Activated CD4-positive, alpha-beta T cell treated with anti-CD3 and anti-CD28 coated beads, Interleukin-2, amount 10 ng/mL, durations not matched to agents 24 days and 14 days (primary cell): ENCODE measurements at regions of chr12 and their contacts with region 1.

Region 1: DNA sequence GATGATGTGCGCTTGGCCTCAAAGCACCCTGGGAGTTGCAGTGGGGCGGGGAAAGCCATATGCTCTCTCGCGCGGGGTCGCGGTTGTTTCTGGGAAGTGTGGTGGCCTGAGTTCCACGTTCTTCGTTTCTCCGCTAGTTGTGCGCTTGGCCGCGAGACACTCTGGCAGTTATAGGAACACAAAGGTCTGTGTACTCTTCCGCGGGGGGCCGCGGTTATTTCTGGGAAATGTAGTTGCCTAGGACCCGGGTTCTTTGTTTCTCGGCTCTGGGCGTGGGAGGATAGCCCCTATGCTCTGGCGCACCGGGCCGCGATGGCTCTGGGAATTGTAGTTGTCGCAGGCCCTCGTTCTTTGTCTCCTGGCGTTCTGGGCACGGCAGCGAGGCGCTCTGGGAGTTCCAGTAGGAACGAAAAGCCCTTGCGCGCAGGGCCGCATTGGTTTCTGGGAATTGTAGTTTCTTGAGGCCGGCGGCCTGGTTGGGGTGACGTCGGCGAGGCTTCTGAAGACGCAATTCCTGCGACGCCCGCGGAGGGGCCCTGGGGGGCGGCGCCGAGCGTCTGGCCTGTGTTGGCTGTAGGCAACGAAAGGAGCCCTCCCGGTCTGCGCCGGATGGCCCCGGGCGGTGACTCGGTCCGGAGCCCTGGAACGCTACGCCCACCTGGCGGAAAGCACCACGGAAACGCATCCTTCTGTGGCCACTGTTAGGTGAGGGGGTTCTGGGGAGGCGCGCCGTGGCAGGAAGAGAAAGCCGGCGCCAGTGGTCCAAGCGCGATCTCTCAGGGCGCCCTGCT is at the start of gene ZNF140:
- DNase-seq: peak; percentile 98
- H3K4me3 Mint-ChIP-seq: no peak within 1 kb of the TSS
- H3K27ac Mint-ChIP-seq: no peak within 1 kb of the TSS
- H3K4me1 Mint-ChIP-seq: peaks cover 4% of the 10 kb centered on the region
- H3K27me3 Mint-ChIP-seq: no peaks in the 10 kb centered on the region
- total RNA-seq, gene ZNF140: 12.7 and 14.5 TPM in 2 replicates

Region 2: DNA sequence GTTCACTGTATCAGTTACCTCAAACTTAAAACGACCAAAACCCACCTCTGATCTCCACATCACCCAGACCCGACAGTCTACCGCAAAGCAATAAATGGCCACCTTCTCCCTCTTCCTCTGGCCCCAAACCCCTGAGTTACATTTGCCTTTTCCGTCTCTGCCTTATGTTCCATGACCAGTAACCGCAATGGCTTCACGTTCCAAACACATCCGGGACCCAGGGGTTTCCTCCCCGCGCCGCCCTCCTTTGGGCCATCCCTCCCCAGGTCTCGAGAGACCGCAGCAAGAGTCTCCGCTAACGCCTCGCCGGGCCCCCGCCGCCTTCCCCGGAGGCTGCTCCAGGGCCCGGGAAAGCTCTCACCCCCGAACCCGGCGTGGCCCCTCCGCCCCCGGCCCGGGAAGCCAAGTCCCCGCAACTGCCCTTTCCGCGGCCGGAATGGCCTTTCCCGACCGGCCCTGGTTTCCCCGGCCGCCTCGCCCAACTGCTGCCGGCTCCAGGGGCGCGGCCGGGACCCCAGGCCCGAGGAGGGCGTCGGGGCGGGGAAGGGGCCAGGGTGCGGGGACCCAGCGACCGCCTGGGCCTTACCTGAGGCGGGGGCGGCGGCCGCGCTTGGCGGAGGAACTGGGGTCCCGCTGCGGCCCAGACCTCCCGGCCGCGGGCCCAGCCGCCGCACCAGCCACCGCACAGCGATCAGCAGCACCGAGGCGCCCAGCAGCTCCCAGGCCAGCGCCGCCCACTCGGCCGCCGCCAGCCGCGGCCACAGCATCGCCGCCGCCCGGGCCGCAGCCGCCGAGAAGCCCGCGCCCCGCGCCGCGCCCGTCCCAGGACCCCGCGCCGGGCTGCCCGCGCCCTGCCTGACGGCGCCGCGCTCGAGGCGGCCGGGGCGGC is 319.3 kb before region 1 on chr12 and contains the start of gene ANKLE2:
- intact Hi-C with region 1: loop called (anchors 1 kb)
- DNase-seq: peak; percentile 93
- H3K4me3 Mint-ChIP-seq: peak within 1 kb of the TSS; percentile 89
- H3K27ac Mint-ChIP-seq: peak within 1 kb of the TSS; percentile 96
- H3K4me1 Mint-ChIP-seq: peaks cover 18% of the 10 kb centered on the region
- H3K27me3 Mint-ChIP-seq: no peaks in the 10 kb centered on the region
- total RNA-seq, gene ANKLE2: 137 and 155 TPM in 2 replicates

Region 3: DNA sequence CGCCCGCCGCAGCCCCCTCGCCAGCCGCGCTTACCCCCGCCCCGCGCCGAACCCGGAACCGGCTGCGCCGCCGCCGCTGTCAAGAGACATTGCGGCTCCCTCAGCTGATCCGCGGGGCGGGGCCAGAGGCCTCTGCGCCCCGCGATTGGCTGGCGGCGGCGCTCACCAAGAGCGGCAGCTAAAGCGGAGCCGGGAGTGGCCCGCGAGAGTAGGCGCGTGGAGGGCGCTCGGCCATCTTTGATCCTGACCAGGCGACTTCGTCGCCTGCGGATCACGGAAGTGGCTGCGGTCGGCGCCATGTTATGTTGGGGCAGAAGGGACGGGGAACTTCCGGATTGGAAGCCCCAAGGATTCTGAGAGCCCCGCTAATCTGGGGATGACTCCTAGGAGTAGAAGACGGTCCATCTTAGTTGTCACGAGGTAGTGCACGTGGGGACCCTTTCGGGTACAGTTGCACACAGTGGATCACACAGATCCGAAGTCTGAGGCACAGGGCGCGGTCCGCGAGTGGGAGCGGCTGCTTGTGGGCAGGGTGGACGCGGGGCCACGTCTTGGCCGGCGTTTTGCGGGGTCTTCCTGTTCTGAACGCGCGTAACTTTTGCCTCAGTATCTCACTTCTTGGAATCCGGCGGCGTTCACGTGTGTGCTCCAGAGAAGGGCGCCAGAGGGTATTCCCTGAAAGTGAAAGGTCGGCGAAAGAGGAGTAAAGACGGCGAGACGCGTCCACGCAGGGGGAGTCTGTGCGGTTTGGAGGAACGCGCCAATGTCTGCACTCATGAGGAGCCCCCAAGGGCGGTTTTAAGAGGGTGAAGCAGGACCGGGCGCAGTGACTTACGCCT is 192.8 kb before region 1 on chr12 and contains the start of gene CHFR:
- intact Hi-C with region 1: loop called (anchors 1 kb)
- DNase-seq: peak; percentile 98
- H3K4me3 Mint-ChIP-seq: peak within 1 kb of the TSS; percentile 98
- H3K27ac Mint-ChIP-seq: peak within 1 kb of the TSS; percentile 99
- H3K4me1 Mint-ChIP-seq: peaks cover 13% of the 10 kb centered on the region
- H3K27me3 Mint-ChIP-seq: no peaks in the 10 kb centered on the region
- total RNA-seq, gene CHFR: 52.9 and 60.7 TPM in 2 replicates

Region 4: DNA sequence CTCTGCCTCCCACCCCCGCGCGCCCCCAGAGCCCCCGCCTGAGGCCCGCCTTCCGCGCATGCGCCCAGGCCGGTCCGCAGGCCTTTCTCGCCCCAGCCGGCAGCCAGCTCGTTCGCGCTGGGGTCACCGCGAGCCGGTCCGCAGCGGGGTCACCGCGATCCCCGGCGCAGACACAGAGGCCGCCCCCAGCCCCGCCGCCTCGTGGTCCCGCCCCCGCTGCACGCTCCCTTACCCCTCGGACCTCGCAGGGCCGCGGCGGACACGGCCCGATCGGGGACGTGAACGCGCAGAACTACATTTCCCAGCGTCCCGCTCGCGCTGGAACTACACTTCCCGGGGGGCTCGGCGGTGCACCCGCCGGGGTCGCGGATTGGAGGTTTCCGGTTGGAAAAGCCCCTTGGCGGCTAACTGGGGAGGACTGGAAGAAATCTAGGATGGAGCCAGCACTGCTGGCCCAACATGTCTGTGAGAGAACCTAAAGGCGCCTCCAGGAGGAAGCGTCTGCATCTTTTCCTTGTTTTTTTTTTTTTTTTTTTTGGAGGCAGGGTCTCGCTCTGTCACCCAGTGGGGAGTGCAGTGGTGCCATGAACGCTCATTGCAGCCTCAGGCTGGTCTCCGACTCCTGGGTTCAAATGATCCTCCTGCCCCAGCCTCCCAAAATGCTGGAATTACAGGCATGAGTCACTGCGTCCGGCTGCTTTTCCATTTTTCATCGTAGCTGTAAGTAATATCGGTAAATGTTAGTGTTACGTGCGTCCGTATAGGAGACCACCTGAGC is 124.4 kb before region 1 on chr12 and contains the start of gene ZNF605:
- intact Hi-C with region 1: loop called (anchors 1 kb)
- DNase-seq: peak; percentile 96
- H3K4me3 Mint-ChIP-seq: peak within 1 kb of the TSS; percentile 98
- H3K27ac Mint-ChIP-seq: peak within 1 kb of the TSS; percentile 95
- H3K4me1 Mint-ChIP-seq: peaks cover 19% of the 10 kb centered on the region
- H3K27me3 Mint-ChIP-seq: no peaks in the 10 kb centered on the region
- total RNA-seq, gene ZNF605: 6.6 and 7.6 TPM in 2 replicates

Region 5: GRCh38 chr12:133037207-133038005 is 43.2 kb before region 1 on chr12 and contains the start of gene ZNF84:
- intact Hi-C with region 1: loop called (anchors 1 kb)
- DNase-seq: peak; percentile 99
- H3K4me3 Mint-ChIP-seq: peak within 1 kb of the TSS; percentile 94
- H3K27ac Mint-ChIP-seq: peak within 1 kb of the TSS; percentile 99
- H3K4me1 Mint-ChIP-seq: peaks cover 11% of the 10 kb centered on the region
- H3K27me3 Mint-ChIP-seq: peaks cover 3% of the 10 kb centered on the region
- total RNA-seq, gene ZNF84: 20.1 and 23.1 TPM in 2 replicates

Region 6: DNA sequence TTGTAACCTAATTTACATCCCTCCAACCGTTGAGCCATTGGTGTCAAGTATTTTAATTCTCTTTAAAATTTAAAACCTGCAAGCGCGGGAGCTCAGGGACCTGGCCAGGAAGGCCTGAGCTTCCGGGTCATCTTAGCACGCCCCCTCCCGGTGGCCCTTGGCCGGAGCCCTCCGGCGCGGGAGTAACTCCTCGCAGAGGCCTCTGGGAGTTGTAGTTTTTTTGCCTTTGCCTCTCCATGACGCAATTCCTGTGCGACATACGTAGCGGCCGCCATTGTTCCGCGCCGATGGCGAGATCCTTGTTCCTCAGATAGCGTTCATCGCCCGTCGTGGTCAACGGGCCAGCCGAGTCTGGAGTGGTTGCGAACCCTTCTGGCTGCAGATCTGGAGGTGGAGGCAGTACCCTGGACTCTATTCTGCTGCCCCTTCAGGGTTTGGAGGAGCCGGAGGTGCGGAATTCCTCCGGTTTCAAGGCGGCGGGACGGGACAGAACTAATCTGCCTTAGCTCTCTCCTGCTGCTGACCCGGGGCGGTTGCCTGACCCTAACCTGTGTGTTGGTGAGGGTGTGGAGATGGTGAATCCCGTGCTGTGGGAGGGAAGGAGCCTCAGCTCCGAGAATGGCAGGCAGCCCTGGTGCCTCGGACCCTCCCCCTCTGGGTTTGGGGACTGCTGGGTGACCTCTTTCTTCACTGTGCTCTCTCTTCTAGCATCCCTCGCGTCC is 100.8 kb after region 1 on chr12 and contains the start of gene ZNF268:
- intact Hi-C with region 1: loop called (anchors 1 kb)
- DNase-seq: peak; percentile 98
- H3K4me3 Mint-ChIP-seq: peak within 1 kb of the TSS; percentile 92
- H3K27ac Mint-ChIP-seq: peak within 1 kb of the TSS; percentile 93
- H3K4me1 Mint-ChIP-seq: peaks cover 6% of the 10 kb centered on the region
- H3K27me3 Mint-ChIP-seq: no peaks in the 10 kb centered on the region
- total RNA-seq, gene ZNF268: 17.2 and 19.4 TPM in 2 replicates